ENCODE measurements at regions of chr2 and their contacts with region 1.

Region 1: DNA sequence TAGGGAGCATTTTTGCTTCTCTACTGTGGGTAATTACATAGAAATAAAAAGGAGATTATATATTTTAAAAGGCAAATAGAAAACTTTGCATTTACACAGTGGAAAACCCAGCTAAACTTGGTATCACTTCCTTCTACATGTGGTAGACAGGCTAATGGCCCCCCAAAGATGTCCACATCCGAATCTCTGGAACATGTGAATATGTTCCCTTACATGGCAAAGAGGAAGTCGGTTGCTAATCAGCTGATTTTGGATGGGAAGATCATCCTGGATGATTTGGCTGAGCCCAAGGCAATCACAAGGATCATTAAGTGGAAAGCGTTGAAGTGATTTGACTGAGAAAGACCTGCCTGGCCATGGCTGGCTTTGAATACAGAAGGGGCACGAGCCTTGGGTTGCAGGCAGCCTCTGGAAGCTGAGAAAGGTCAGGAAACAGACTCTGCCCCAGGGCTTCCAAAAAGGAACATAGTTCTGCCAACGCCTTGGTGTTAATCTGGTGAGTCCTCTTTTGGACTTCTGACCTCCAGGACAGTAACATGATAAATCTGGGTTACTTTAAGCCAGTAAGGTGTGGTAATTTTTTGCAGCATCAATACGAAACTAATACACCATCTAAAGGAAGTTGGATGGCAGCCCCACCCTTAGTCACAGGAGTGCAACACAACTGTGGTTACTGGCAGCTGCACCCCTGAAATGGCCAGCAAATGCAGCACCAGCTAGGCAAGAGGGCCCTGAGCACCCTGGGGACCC is 26.0 kb downstream of the CREG2 start:
- DNase-seq: peak in 1 of 5 donors; percentile 23
- H3K4me3 ChIP-seq: peak overlapping the region; percentile 9
- H3K4me3 Mint-ChIP-seq: peak overlapping the region in 6 of 7 donors; percentile 29 to 81 (median 54)
- H3K27ac ChIP-seq: no peak overlapping the region
- H3K27ac Mint-ChIP-seq: peak overlapping the region; percentile 16 to 90 (median 80)
- H3K4me1 ChIP-seq: peaks cover 27% of the 10 kb centered on the region
- H3K4me1 Mint-ChIP-seq: peaks cover 28 to 37% (median 34%) of the 10 kb centered on the region in 3 donors
- H3K27me3 ChIP-seq: no peaks in the 10 kb centered on the region
- H3K27me3 Mint-ChIP-seq: peaks cover 0 to 6% of the 10 kb centered on the region in 2 donors

Region 2: DNA sequence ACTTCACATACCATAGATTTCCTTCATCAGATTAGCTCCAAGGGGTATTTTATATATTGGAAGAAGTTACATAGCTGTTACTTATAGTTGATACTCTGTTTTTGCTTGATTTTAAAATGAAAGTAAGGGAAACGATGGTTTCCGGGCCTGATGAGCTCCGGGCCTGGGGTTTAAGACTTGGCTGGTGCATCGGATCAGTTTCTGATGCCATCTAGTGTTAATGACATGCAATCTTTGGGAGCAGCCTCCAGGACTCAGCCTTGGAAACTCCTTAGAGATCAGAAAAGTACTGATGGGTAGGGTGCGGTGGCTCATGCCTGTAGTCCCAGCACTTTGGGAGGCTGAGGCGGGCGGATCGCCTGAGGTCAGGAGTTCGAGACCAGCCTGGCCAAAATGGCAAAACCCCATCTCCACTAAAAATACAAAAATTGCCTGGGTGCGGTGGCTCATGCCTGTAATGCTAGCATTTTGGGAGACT is 155.7 kb before region 1 on chr2:
- CTCF ChIA-PET with region 1: no interaction called
- POLR2A ChIA-PET with region 1: no interaction called
- DNase-seq: peak in 4 of 5 donors; percentile 9 to 55 (median 35)
- H3K4me3 ChIP-seq: no peak overlapping the region
- H3K4me3 Mint-ChIP-seq: peak overlapping the region in 6 of 7 donors; percentile 63 to 77 (median 70)
- H3K27ac ChIP-seq: no peak overlapping the region
- H3K27ac Mint-ChIP-seq: peak overlapping the region in 7 of 8 donors; percentile 39 to 85 (median 56)
- H3K4me1 ChIP-seq: no peaks in the 10 kb centered on the region
- H3K4me1 Mint-ChIP-seq: peaks cover 8 to 15% (median 14%) of the 10 kb centered on the region in 3 donors
- H3K27me3 ChIP-seq: no peaks in the 10 kb centered on the region
- H3K27me3 Mint-ChIP-seq: peaks cover 0 to 3% of the 10 kb centered on the region in 2 donors

Region 3: GRCh38 chr2:101387151-101387807 is 26.0 kb after region 1 on chr2 and contains the start of gene CREG2:
- CTCF ChIA-PET with region 1: interaction called, 21 read pairs
- POLR2A ChIA-PET with region 1: no interaction called
- DNase-seq: peak; percentile 34 to 64 (median 53)
- H3K4me3 ChIP-seq: peak within 1 kb of the TSS; percentile 27
- H3K4me3 Mint-ChIP-seq: peak within 1 kb of the TSS; percentile 63 to 77 (median 77)
- H3K27ac ChIP-seq: no peak within 1 kb of the TSS
- H3K27ac Mint-ChIP-seq: peak within 1 kb of the TSS in 2 of 8 donors; percentile 47 to 72
- H3K4me1 ChIP-seq: peaks cover 13% of the 10 kb centered on the region
- H3K4me1 Mint-ChIP-seq: peaks cover 5 to 12% (median 7%) of the 10 kb centered on the region in 3 donors
- H3K27me3 ChIP-seq: peaks cover 25% of the 10 kb centered on the region
- H3K27me3 Mint-ChIP-seq: peaks cover 50 to 77% of the 10 kb centered on the region in 2 donors
- total RNA-seq, gene CREG2: not detected

Measured in CD8-positive, alpha-beta memory T cell (primary cell).